Breast epithelium (tissue), 4 donors: ENCODE measurements at regions of chr3 and their contacts with region 1.

Region 1: DNA sequence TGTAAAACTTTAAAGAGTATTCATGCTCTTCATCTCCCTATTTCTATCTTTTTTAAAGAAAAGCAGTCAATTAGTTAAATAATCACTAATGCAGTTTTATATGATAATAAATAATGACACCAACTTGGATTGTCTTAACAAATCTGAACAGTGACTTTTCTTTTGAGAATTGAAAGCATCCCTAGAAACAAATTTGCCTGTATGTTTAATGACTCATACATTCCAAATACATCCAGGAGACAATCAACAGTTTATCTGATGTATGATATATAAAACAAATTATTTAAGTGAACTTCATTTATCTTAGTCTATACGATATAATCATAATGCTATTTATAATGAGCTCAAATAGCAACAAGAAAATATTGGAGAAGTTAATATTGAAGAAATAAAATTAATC is 78.0 kb downstream of the ALCAM start:
- DNase-seq: no peak
- H3K4me3 ChIP-seq: no peak overlapping the region
- H3K27ac ChIP-seq: no peak overlapping the region
- H3K4me1 ChIP-seq: no peaks in the 10 kb centered on the region
- H3K27me3 ChIP-seq: no peaks in the 10 kb centered on the region
- CTCF ChIP-seq: no peak
- POLR2A ChIP-seq: no peak

Region 2: GRCh38 chr3:103919327-103919726 is 1525.4 kb before region 1 on chr3:
- intact Hi-C with region 1: no loop called
- DNase-seq: no peak
- H3K4me3 ChIP-seq: no peak overlapping the region
- H3K27ac ChIP-seq: no peak overlapping the region
- H3K4me1 ChIP-seq: no peaks in the 10 kb centered on the region
- H3K27me3 ChIP-seq: no peaks in the 10 kb centered on the region
- CTCF ChIP-seq: no peak
- POLR2A ChIP-seq: no peak

Region 3: DNA sequence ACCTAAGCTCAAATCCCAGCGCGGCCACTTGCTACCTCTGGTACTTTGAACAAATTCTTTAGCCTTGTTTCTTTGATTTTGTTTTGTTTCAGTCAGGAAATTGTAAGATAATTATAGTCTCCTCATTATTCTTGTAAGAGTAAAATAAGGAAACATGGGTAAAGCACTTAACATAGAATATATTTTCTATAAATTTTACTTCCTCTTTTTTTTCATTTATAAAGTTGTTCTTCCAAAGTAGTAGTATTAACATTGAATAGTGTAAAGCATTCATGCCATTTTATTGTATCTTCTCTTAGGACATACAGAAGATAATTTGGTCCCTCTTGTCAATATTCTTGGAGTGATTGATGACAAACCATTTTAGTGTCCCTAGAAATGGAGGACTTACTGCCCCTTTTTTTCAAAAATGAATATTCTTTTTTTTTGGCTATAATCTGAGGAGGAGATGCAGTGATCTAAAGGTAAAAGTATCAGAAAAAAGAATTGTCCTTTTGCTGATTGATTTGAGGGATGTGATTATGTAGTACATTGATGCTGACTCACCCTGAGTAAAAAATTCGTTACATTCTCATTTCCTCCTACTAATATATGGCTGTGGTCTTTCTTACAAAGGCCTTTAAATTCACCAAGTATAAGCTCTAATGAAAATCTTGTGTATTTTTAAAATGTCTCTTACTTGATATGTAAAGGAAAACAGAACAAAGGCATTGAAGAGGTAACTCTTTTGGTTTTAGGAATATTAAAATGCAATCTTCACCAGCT is 27.0 kb before region 1 on chr3:
- intact Hi-C with region 1: loop called (anchors 2 kb)
- DNase-seq: no peak
- H3K4me3 ChIP-seq: no peak overlapping the region
- H3K27ac ChIP-seq: no peak overlapping the region
- H3K4me1 ChIP-seq: no peaks in the 10 kb centered on the region
- H3K27me3 ChIP-seq: no peaks in the 10 kb centered on the region
- CTCF ChIP-seq: no peak
- POLR2A ChIP-seq: no peak